Activated CD8-positive, alpha-beta memory T cell treated with anti-CD3 and anti-CD28 coated beads, Interleukin-2, amount 10 ng/mL, durations not matched to agents 7 days and 5 days (primary cell): ENCODE measurements at regions of chrX and their contacts with region 1.

Region 1: GRCh38 chrX:47144626-47145394 is at the starts of genes NDUFB11 and RBM10:
- DNase-seq: peak; percentile 96
- ATAC-seq: peak; percentile 95
- H3K4me3 Mint-ChIP-seq: peak within 1 kb of the TSS; percentile 98
- H3K27ac Mint-ChIP-seq: peak within 1 kb of the TSS; percentile 99
- H3K4me1 Mint-ChIP-seq: peaks cover 23% of the 10 kb centered on the region
- H3K27me3 Mint-ChIP-seq: no peaks in the 10 kb centered on the region
- total RNA-seq, gene NDUFB11: 82.7 to 97.6 TPM
- total RNA-seq, gene RBM10: 64.9 to 65.6 TPM

Region 2: DNA sequence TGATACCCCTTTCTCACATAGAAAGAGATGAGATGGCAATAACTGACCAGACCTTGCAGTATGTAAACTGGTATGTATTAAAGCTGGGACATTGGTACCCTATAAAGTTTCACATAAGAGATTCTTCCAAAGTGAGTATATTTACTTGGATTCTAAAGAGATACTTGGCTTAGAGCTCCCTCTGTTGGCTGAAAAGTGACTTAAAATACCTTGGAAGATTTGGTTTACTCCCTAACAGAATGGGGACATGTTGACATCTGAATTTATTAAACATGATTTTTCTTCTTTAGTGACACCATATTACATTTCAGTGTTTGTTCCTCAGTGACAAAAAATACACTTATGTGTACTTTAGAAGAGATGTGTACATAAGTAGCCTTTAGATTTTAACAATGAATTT is 114.5 kb before region 1 on chrX:
- CTCF ChIA-PET with region 1: no interaction called
- DNase-seq: no peak
- ATAC-seq: no peak
- H3K4me3 Mint-ChIP-seq: no peak overlapping the region
- H3K27ac Mint-ChIP-seq: no peak overlapping the region
- H3K4me1 Mint-ChIP-seq: no peaks in the 10 kb centered on the region
- H3K27me3 Mint-ChIP-seq: no peaks in the 10 kb centered on the region

Region 3: DNA sequence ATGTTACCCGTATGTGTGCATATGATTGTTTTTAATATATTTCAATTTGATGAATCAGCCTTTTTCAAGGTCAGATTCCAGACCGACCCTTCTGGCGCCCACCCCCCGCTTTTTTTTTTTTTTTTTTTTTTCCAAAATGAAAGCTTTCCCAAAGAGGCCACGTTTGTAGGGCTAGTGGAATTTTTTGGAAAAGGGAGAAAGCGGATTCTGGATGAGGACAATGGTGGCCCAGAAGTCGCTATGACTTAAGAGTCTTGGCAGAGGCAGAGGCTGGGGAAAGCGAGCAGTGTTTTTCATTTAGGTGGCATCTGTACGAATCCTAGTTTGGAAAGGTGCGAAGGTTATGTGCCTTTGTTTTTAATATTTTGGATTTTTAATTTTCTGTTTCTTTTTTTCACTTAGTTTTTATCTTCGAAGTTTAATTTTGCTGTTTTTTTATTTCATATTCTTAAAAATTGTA is 14.9 kb before region 1 on chrX:
- CTCF ChIA-PET with region 1: interaction called, 10 read pairs
- DNase-seq: no peak
- ATAC-seq: no peak
- H3K4me3 Mint-ChIP-seq: peak overlapping the region; percentile 96
- H3K27ac Mint-ChIP-seq: no peak overlapping the region
- H3K4me1 Mint-ChIP-seq: peaks cover 6% of the 10 kb centered on the region
- H3K27me3 Mint-ChIP-seq: no peaks in the 10 kb centered on the region